Activated CD8-positive, alpha-beta memory T cell treated with anti-CD3 and anti-CD28 coated beads, Interleukin-2, amount 10 ng/mL, durations not matched to agents 7 days and 5 days (primary cell): ENCODE measurements at regions of chr15 and their contacts with region 1.

Region 1: GRCh38 chr15:73051811-73052678 is at the start of gene NEO1:
- DNase-seq: peak; percentile 78
- ATAC-seq: peak; percentile 81
- H3K4me3 Mint-ChIP-seq: peak within 1 kb of the TSS; percentile 74
- H3K27ac Mint-ChIP-seq: no peak within 1 kb of the TSS
- H3K4me1 Mint-ChIP-seq: peaks cover 12% of the 10 kb centered on the region
- H3K27me3 Mint-ChIP-seq: peaks cover 42% of the 10 kb centered on the region
- total RNA-seq, gene NEO1: 3.4 to 5.4 TPM

Region 2: GRCh38 chr15:73069109-73069508 is 17.1 kb after region 1 on chr15:
- CTCF ChIA-PET with region 1: interaction called, 10 read pairs
- DNase-seq: no peak
- ATAC-seq: no peak
- H3K4me3 Mint-ChIP-seq: no peak overlapping the region
- H3K27ac Mint-ChIP-seq: no peak overlapping the region
- H3K4me1 Mint-ChIP-seq: no peaks in the 10 kb centered on the region
- H3K27me3 Mint-ChIP-seq: peaks cover 11% of the 10 kb centered on the region